HCT116 (cell line): ENCODE measurements at regions of chr18 and their contacts with region 1.

Region 1: DNA sequence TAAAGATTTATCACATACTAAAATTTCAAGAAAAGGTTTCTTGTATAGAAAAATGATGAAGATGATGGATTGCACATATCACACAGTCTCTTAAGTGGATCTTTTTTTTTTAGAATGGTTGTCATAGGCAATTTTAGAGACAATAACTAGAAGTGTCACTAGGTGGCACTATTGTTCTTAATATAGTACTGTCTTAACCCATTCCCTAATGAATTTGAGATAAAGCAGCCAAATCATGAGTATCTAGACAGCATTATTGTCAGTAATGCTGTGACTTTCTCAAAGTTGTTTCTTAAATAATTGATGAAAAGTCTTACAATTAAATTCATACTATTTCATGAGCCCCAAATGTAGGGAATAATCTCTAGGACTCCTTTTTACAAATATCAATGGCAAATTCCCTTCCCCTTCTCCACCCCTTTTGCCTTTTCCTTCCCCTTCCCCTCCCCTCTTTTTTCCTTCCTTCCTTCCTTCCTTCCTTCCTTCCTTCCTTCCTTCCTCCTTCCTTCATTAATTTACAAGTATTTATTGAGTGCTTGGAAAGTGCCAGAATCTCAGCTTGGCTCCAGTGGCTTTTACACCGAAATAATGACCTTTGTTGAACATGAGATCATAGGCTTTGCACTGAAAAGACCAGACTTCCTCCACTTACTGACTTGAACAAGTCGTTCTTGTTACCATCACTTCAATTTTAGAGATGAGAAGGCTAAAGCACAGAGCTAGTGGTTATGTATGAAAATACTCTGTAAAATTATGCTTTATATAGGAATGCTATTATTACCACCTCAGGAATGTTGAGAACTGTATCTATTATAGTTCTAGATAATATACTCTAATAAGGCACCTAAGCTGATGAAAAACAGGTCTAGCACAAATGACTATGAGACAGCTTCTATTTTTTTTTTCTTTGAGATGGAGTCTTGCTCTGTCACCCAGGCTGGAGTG is 19.8 kb downstream of the MYL12B start:
- DNase-seq: peak; percentile 78
- ATAC-seq: peak; percentile 71
- H3K4me3 ChIP-seq: no peak overlapping the region
- H3K27ac ChIP-seq: peak overlapping the region; percentile 11; the same call in 1 of the 2 replicates
- H3K4me1 ChIP-seq: peaks cover 15 to 40% of the 10 kb centered on the region in 2 experiments
- H3K27me3 ChIP-seq: no peaks in the 10 kb centered on the region
- CTCF ChIP-seq: peak; percentile 45 to 75 (median 74)
- POLR2A ChIP-seq: no peak
- RAD21 ChIP-seq: peak; percentile 93

Region 2: DNA sequence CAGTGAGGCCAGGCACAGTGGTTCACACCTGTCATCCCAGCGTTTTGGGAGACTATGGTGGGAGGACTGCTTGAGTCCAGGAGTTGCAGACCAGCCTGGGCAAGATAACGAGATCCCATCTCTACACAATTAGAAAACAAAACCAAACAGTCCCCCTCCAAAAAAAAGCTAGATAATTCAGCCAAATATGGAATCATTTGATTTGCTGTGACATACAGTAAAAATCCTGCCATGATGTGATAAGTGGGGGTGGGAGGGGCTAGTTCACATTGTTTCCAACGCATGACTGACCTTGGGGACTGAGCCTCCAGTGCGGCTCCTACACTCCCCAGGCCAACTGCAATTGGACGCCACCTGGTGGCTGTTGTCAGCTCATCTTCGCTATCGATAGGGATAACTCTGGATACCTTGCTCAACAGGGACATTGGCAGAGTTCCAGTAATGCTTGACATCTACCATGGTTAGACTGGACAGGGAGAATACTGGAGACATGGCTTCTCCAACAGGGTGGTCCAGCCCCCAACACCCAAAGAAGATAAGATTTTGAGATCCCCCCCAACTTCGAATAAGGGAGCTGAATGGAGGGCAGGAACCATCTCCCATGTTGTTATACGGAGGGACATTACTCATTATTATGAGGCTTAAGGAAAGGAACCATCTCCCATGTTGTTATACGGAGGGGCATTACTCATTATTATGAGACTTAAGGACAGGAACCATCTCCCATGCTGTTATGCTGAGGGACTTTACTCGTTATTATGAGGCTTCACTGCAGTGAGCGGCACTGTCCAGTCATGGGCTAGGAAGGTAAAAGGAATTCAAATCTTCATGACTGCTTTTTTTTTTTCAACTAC is 304.2 kb after region 1 on chr18:
- CTCF ChIA-PET with region 1: interaction called, 10 read pairs
- POLR2A ChIA-PET with region 1: no interaction called
- RAD21 ChIA-PET with region 1: interaction called in 1 of 2 experiments, 3 read pairs
- intact Hi-C with region 1: loop called (anchors 2 kb)
- DNase-seq: peak; percentile 91
- ATAC-seq: peak; percentile 96
- H3K4me3 ChIP-seq: no peak overlapping the region
- H3K27ac ChIP-seq: no peak overlapping the region
- H3K4me1 ChIP-seq: peaks cover 35 to 55% of the 10 kb centered on the region in 2 experiments
- H3K27me3 ChIP-seq: no peaks in the 10 kb centered on the region
- CTCF ChIP-seq: peak in 2 of 3 experiments; percentile 89 to 93; a peak in 4 of 6 replicates
- POLR2A ChIP-seq: no peak
- RAD21 ChIP-seq: no peak

Region 3: DNA sequence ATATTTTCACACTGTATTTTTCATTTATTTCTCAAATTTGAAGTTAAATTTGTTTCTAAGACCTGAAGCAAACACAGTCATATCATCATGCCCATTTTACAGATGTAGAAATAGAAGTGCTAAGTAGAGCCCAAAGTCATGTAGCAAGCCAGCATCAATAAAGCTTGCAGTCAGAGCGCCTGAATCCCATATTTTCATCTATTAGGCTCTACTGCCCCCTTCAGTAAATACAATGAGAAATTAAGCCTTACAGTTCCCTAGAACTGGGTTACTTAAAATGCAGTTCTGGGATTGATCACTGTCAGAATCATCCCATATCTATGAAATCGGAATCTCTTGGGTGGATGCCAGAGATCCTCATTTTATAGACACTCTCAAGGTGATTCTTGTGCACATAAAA is 588.1 kb after region 1 on chr18:
- CTCF ChIA-PET with region 1: interaction called, 19 read pairs
- POLR2A ChIA-PET with region 1: interaction called, 3 read pairs
- RAD21 ChIA-PET with region 1: no interaction called
- intact Hi-C with region 1: loop called (anchors 1 kb)
- DNase-seq: peak; percentile 40
- ATAC-seq: peak; percentile 87
- H3K4me3 ChIP-seq: no peak overlapping the region
- H3K27ac ChIP-seq: no peak overlapping the region
- H3K4me1 ChIP-seq: no peaks in the 10 kb centered on the region
- H3K27me3 ChIP-seq: peaks cover 42% of the 10 kb centered on the region
- CTCF ChIP-seq: peak; percentile 31 to 59 (median 51); a peak in 4 of 6 replicates
- POLR2A ChIP-seq: no peak
- RAD21 ChIP-seq: peak; percentile 74

Region 4: GRCh38 chr18:4068552-4069158 is 786.9 kb after region 1 on chr18:
- CTCF ChIA-PET with region 1: no interaction called
- POLR2A ChIA-PET with region 1: no interaction called
- RAD21 ChIA-PET with region 1: no interaction called
- intact Hi-C with region 1: loop called (anchors 2 kb)
- DNase-seq: peak; percentile 51
- ATAC-seq: peak; percentile 85
- H3K4me3 ChIP-seq: no peak overlapping the region
- H3K27ac ChIP-seq: no peak overlapping the region
- H3K4me1 ChIP-seq: no peaks in the 10 kb centered on the region
- H3K27me3 ChIP-seq: no peaks in the 10 kb centered on the region
- CTCF ChIP-seq: peak; percentile 31 to 77 (median 72); a peak in 5 of 6 replicates
- POLR2A ChIP-seq: no peak
- RAD21 ChIP-seq: peak; percentile 55